ENCODE measurements at regions of chr2 and their contacts with region 1.

Region 1: GRCh38 chr2:237060534-237061312 is 25.0 kb upstream of the COPS8 start:
- DNase-seq: peak; percentile 48
- ATAC-seq: peak; percentile 92
- H3K4me3 ChIP-seq: no peak overlapping the region
- H3K27ac ChIP-seq: no peak overlapping the region
- H3K4me1 ChIP-seq: peaks cover 0 to 7% of the 10 kb centered on the region in 2 experiments; a peak in 1 of 4 replicates
- H3K27me3 ChIP-seq: no peaks in the 10 kb centered on the region
- CTCF ChIP-seq: peak; percentile 56 to 72 (median 68); a peak in 5 of 6 replicates
- POLR2A ChIP-seq: no peak
- RAD21 ChIP-seq: peak; percentile 84

Region 2: DNA sequence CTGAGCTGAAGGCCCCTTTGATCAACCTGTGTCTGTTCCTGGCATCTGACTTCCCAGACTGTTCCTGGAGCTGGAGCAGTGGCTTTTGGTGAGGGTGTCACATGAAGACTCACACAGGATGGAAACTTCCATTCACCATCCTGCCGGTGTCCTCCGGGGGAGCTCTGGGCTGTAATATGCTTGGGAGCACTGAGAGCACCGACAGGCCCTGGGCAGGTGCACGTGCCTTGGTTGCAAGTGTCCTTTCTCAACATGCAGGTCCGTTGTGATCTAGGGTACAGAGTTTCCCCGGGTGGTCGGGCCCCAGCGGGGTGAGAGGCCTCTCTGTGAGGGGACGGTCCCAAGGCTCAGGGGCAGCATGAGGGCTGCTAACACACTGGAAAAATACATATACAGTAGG is 867.7 kb before region 1 on chr2:
- CTCF ChIA-PET with region 1: no interaction called
- POLR2A ChIA-PET with region 1: no interaction called
- RAD21 ChIA-PET with region 1: no interaction called
- intact Hi-C with region 1: loop called (anchors 10 kb)
- DNase-seq: no peak
- ATAC-seq: peak; percentile 72
- H3K4me3 ChIP-seq: no peak overlapping the region
- H3K27ac ChIP-seq: no peak overlapping the region
- H3K4me1 ChIP-seq: no peaks in the 10 kb centered on the region
- H3K27me3 ChIP-seq: no peaks in the 10 kb centered on the region
- CTCF ChIP-seq: 0 out of 6 replicates have a peak, but pooled peaks of 1 of the 3 experiments have one; percentile 16
- POLR2A ChIP-seq: no peak
- RAD21 ChIP-seq: 0 out of 2 replicates have a peak, but pooled peaks have one; percentile 4

Region 3: DNA sequence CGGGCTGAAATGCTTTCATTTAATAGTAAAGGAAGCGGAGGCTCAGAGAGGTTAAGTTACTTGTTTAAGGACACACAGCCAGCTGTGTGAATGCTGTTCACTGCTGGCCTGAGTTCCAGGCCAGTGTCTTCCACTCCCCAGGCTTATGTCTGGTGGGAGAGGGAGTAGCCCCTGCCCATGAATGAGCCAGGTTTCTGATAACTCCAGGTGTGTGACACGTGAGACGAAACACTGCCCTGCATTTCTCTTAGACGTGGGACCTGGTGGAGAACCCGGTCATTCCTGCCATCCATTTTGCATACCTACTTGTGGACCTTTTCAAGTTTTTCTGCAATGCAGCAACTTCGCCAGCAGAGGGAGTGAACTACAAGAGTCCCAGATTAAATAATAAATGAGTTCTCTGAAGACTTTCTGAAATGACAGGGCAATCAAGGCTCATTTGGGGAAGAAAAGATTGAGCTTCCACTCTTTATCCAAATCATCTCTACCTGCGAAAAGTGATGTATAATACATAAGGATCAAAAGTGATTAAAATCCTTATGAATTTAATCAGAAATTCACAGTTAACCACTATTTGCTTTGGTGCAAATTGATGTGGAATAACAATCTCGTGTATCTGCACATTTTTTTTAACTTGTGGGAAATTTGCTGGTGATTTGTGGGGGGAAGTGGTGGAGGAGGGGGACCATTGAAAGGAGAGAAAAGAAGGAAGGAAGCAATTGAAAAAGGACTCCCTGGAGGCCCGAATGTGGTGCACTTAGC is 717.1 kb before region 1 on chr2:
- CTCF ChIA-PET with region 1: no interaction called
- POLR2A ChIA-PET with region 1: no interaction called
- RAD21 ChIA-PET with region 1: no interaction called
- intact Hi-C with region 1: loop called (anchors 1 kb)
- DNase-seq: peak; percentile 67
- ATAC-seq: peak; percentile 80
- H3K4me3 ChIP-seq: no peak overlapping the region
- H3K27ac ChIP-seq: no peak overlapping the region
- H3K4me1 ChIP-seq: no peaks in the 10 kb centered on the region
- H3K27me3 ChIP-seq: no peaks in the 10 kb centered on the region
- CTCF ChIP-seq: peak; percentile 57 to 83 (median 83); a peak in 5 of 6 replicates
- POLR2A ChIP-seq: no peak
- RAD21 ChIP-seq: peak; percentile 56

Region 4: GRCh38 chr2:236352761-236353593 is 707.7 kb before region 1 on chr2:
- CTCF ChIA-PET with region 1: no interaction called
- POLR2A ChIA-PET with region 1: no interaction called
- RAD21 ChIA-PET with region 1: no interaction called
- intact Hi-C with region 1: loop called (anchors 1 kb)
- DNase-seq: peak; percentile 8
- ATAC-seq: peak; percentile 58
- H3K4me3 ChIP-seq: no peak overlapping the region
- H3K27ac ChIP-seq: no peak overlapping the region
- H3K4me1 ChIP-seq: no peaks in the 10 kb centered on the region
- H3K27me3 ChIP-seq: no peaks in the 10 kb centered on the region
- CTCF ChIP-seq: peak; percentile 70 to 92 (median 73)
- POLR2A ChIP-seq: no peak
- RAD21 ChIP-seq: peak; percentile 79

Region 5: DNA sequence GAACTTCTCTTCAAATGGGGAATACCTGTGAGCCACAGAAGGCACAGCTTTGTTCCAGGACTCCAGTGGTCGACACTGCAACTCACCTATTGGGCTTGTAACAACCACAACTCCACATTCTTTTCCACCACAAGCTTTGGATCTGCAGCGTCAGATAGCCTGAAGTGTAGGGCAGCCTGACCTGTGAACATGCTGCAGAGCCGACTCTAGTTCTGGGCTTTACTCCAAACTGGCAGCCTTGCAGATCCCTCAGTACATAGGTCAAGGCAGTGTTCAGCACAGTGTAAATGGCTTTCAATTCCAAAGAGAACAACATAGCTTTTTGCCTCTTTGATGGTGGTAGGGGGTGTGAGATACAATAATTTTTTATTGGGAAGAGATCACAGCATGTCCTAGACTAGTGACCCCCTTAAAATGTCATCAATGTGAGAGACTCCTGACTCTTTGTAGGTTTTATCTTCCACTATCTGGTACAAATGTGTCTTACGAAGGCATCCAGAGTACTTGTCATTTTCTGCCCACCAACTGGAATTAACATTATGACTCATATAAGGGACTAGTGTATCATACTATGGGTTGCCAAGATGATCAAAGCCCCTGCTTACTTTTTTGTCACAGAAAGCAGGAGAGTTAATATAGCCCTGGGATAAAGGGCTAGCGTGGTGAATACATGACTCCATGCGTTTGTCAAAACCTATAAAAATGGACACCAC is 174.8 kb after region 1 on chr2:
- CTCF ChIA-PET with region 1: no interaction called
- POLR2A ChIA-PET with region 1: no interaction called
- RAD21 ChIA-PET with region 1: no interaction called
- intact Hi-C with region 1: no loop called
- DNase-seq: no peak
- ATAC-seq: 0 out of 2 replicates have a peak, but pooled peaks have one; percentile 36
- H3K4me3 ChIP-seq: no peak overlapping the region
- H3K27ac ChIP-seq: no peak overlapping the region
- H3K4me1 ChIP-seq: no peaks in the 10 kb centered on the region
- H3K27me3 ChIP-seq: no peaks in the 10 kb centered on the region
- CTCF ChIP-seq: no peak
- POLR2A ChIP-seq: no peak
- RAD21 ChIP-seq: no peak

Region 6: DNA sequence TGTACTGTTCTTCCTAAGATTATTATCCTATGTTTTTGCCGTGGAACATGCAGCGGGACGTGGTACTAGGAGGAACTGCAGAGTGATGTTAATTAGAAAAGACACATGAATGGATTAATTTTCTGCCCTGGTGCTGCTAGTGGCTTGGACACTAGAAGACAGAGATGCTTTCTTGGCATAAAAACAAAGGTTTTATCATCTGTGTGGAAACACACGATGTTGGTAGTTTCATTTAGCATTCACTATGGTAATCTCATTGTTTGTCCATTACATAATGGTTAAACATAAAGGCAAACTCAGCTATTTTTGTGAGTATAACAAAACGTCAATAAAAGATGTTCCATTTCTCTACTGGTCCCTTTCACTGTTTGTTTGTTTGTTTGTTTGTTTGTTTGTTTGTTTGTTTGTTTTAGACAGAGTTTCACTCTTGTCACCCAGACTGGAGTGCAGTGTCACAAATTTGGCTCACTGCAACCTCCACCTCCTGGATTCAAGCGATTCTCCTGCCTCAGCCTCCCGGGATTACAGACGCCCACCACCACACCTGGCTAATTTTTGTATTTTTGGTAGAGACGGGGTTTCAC is 330.5 kb after region 1 on chr2:
- CTCF ChIA-PET with region 1: no interaction called
- POLR2A ChIA-PET with region 1: no interaction called
- RAD21 ChIA-PET with region 1: no interaction called
- intact Hi-C with region 1: no loop called
- DNase-seq: no peak
- ATAC-seq: no peak
- H3K4me3 ChIP-seq: no peak overlapping the region
- H3K27ac ChIP-seq: no peak overlapping the region
- H3K4me1 ChIP-seq: no peaks in the 10 kb centered on the region
- H3K27me3 ChIP-seq: peaks cover 83% of the 10 kb centered on the region
- CTCF ChIP-seq: no peak
- POLR2A ChIP-seq: no peak
- RAD21 ChIP-seq: no peak